ENCODE measurements at regions of chr1 and their contacts with region 1.

Region 1: GRCh38 chr1:169106095-169106920 is at the start of gene ATP1B1:
- DNase-seq: peak; percentile 89 to 94 (median 90)
- ATAC-seq: peak; percentile 53 to 89 (median 79)
- H3K4me3 ChIP-seq: peak within 1 kb of the TSS; percentile 72 to 95 (median 88)
- H3K27ac ChIP-seq: peak within 1 kb of the TSS; percentile 83 to 98 (median 94)
- H3K4me1 ChIP-seq: peaks cover 0 to 63% (median 25%) of the 10 kb centered on the region in 12 donors
- H3K27me3 ChIP-seq: peaks cover 0 to 9% (median 0%) of the 10 kb centered on the region in 9 donors
- CTCF ChIP-seq: peak; percentile 46 to 79 (median 64)
- POLR2A ChIP-seq: peak; percentile 73 to 97
- total RNA-seq, gene ATP1B1: 245 to 640 (median 339) TPM

Region 2: GRCh38 chr1:168585191-168585590 is 521.1 kb before region 1 on chr1:
- intact Hi-C with region 1: no loop called
- DNase-seq: no peak
- ATAC-seq: peak in 3 of 4 donors; percentile 61 to 81 (median 81)
- H3K4me3 ChIP-seq: no peak overlapping the region
- H3K27ac ChIP-seq: peak overlapping the region in 4 of 12 donors; percentile 13 to 36 (median 23)
- H3K4me1 ChIP-seq: peaks cover 0 to 14% (median 0%) of the 10 kb centered on the region in 12 donors
- H3K27me3 ChIP-seq: no peaks in the 10 kb centered on the region
- CTCF ChIP-seq: no peak
- POLR2A ChIP-seq: no peak

Region 3: DNA sequence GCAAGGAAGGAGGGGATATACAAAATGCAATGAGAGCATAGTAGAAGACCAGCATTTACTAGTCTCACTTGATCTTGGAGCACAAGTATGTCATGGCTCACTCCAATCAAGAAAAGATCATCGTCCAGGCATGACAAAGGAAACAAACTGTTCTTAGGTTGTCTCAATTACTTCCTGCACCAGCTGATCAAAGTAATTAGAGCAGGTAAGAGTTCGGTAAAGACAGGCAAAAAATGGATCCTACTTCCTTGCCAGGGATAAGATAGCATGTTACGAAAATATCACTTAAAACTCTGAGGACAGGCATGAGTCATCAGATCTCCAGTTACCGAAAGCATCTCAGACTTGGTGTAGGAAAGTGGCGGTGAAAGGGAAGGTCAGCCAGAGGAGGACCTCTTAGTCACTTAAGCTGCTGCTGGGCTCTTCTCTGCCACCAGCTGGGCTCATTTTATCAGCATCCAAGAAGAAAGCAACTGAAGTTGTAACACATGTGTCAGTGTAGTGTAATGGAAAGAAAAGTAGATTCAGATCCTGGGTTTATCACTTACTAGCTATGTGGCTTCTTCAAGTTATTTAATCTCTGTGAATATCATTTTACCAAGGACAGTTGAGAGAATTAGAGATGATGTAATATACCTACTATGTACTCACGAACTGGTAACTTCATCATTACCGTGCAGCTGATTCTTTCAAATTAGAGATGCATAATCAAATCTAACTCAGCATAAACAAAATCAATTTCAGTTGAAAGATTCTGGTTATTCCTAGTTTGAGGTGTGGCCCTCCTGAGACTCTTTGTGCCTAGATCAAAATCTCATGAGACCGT is 483.1 kb before region 1 on chr1:
- intact Hi-C with region 1: loop called in 4 of 10 experiments (anchors 5 to 10 kb)
- DNase-seq: peak in 1 of 5 donors; percentile 70
- ATAC-seq: peak in 3 of 4 donors; percentile 64 to 94 (median 89)
- H3K4me3 ChIP-seq: no peak overlapping the region
- H3K27ac ChIP-seq: peak overlapping the region in 7 of 12 donors; percentile 0 to 55 (median 18)
- H3K4me1 ChIP-seq: peaks cover 0 to 28% (median 11%) of the 10 kb centered on the region in 12 donors
- H3K27me3 ChIP-seq: no peaks in the 10 kb centered on the region
- CTCF ChIP-seq: peak in 1 of 12 donors; percentile 21
- POLR2A ChIP-seq: no peak

Region 4: GRCh38 chr1:168719306-168720111 is 386.8 kb before region 1 on chr1:
- intact Hi-C with region 1: loop called in 5 of 10 experiments (anchors 5 to 10 kb)
- DNase-seq: no peak
- ATAC-seq: no peak
- H3K4me3 ChIP-seq: no peak overlapping the region
- H3K27ac ChIP-seq: no peak overlapping the region
- H3K4me1 ChIP-seq: peaks cover 0 to 39% (median 5%) of the 10 kb centered on the region in 12 donors
- H3K27me3 ChIP-seq: no peaks in the 10 kb centered on the region
- CTCF ChIP-seq: no peak
- POLR2A ChIP-seq: no peak

Region 5: DNA sequence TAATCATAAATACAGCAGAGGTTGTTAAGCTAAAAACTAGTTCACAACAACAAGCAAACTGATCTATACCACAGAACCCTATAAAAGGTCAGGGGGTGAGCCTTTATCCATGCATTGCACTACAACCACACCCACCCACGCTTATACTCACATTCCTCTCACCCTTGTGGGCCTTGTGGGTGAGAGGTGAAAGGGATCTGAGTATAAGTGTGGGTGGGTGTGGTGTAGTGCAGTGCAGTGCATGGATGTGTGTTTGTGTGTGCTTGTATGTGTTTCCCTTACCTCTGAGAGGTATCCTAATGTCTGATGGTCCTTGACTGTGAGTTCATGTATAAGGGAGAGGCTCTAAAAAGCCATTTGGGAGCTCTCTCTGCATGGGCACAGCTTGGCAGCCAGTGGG is 281.9 kb before region 1 on chr1:
- intact Hi-C with region 1: loop called in 1 of 10 experiments (anchors 5 kb)
- DNase-seq: no peak
- ATAC-seq: peak; percentile 12 to 52 (median 40)
- H3K4me3 ChIP-seq: no peak overlapping the region
- H3K27ac ChIP-seq: peak overlapping the region in 5 of 12 donors; percentile 3 to 43 (median 33)
- H3K4me1 ChIP-seq: peaks cover 0 to 17% (median 4%) of the 10 kb centered on the region in 12 donors
- H3K27me3 ChIP-seq: no peaks in the 10 kb centered on the region
- CTCF ChIP-seq: no peak
- POLR2A ChIP-seq: no peak

Region 6: GRCh38 chr1:168920456-168921094 is 185.7 kb before region 1 on chr1:
- intact Hi-C with region 1: loop called in 2 of 10 experiments (anchors 10 kb)
- DNase-seq: peak in 4 of 5 donors; percentile 29 to 59 (median 42)
- ATAC-seq: peak; percentile 40 to 90 (median 86)
- H3K4me3 ChIP-seq: no peak overlapping the region
- H3K27ac ChIP-seq: peak overlapping the region in 11 of 12 donors; percentile 13 to 80 (median 61)
- H3K4me1 ChIP-seq: peaks cover 0 to 38% (median 12%) of the 10 kb centered on the region in 12 donors
- H3K27me3 ChIP-seq: no peaks in the 10 kb centered on the region
- CTCF ChIP-seq: no peak
- POLR2A ChIP-seq: no peak